MCF 10A (cell line): ENCODE measurements at regions of chr15 and their contacts with region 1.

Region 1: GRCh38 chr15:81400640-81401236 is 26.7 kb upstream of the TMC3 start:
- DNase-seq: peak; percentile 63
- H3K4me3 Mint-ChIP-seq: no peak overlapping the region
- H3K27ac Mint-ChIP-seq: no peak overlapping the region
- H3K4me1 Mint-ChIP-seq: peaks cover 9% of the 10 kb centered on the region
- H3K27me3 Mint-ChIP-seq: no peaks in the 10 kb centered on the region
- CTCF ChIP-seq: peak; percentile 77

Region 2: DNA sequence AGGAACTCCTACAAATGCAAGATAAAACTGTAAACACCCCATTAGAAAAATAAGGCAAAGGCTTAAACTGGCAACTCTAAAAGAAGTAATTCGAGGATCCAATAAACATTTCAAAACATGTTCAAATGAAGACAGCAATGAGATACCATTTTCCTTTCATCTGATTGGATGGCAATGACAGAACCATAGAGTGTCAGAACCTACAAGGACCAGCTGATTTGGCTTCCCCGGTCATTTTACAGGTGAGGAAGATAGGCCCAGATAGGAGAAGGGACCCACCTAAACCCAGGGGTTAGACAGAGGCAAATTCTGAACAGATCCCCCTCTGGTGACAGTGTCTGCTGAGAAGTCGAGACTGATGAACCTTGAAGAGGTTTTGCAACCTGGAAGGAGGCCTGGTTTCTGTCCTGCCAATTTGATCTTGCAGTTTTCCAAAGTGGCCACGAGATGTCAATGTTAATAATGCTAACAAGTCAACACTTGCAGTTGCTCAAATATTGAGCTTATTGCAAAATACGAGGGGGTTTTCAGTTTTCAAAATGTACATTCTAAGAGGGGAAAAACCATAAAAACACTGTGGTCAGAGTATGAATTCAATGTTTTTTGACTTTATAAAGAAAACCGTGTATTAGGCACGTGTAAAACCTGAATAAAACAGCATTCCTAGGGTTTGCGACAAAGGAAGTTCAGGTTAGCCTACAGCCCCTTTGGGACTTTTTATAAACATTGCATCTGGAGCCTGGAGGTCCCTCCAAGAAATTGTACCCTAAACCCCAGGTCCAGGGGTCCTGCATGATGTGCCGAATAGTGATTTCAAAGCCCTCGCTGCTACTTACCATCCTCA is 245.1 kb before region 1 on chr15:
- CTCF ChIA-PET with region 1: interaction called, 3 read pairs
- POLR2A ChIA-PET with region 1: no interaction called
- intact Hi-C with region 1: loop called (anchors 5 kb)
- DNase-seq: peak; percentile 76
- H3K4me3 Mint-ChIP-seq: no peak overlapping the region
- H3K27ac Mint-ChIP-seq: no peak overlapping the region
- H3K4me1 Mint-ChIP-seq: peaks cover 32% of the 10 kb centered on the region
- H3K27me3 Mint-ChIP-seq: no peaks in the 10 kb centered on the region
- CTCF ChIP-seq: peak; percentile 70

Region 3: DNA sequence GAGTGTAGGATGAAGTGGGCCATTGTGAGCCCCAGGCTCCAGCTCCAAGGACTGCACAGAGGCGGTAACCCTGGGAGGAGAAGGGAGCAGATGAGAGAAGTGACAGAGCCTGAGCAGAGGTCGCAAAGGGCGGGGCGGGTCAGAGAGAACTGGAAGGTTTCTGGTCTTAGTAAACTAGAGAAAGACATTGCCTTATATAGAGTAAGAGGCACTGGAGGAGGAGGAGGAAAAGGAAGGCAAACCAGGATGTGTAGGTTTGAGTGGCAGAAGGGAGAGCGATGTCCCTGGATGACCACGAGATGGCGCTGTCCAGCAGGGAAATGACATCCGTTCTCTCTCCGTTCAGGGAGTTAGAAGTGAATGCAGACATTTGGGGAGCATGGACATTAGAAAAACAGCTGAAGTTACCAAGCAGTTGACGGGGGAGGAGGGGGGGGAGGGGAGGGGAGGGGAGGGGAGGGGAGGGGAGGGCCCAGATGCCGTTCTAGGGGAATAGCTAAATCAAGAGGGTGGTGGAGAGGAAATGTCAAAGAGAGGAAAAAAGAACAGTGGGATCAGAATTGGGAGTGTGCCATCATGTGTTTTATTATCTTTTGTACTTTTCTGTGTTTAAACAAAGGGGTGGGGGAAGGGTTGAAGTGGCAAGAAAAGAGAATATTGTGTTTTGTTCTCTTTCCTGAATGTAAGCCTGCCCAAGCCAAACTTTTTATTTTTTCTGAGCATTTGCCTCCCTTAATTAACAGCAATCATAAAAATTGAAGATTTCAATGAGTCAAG is 125.6 kb before region 1 on chr15:
- CTCF ChIA-PET with region 1: interaction called, 318 read pairs
- POLR2A ChIA-PET with region 1: interaction called, 15 read pairs
- intact Hi-C with region 1: loop called (anchors 1 kb)
- DNase-seq: peak; percentile 87
- H3K4me3 Mint-ChIP-seq: no peak overlapping the region
- H3K27ac Mint-ChIP-seq: no peak overlapping the region
- H3K4me1 Mint-ChIP-seq: peaks cover 15% of the 10 kb centered on the region
- H3K27me3 Mint-ChIP-seq: no peaks in the 10 kb centered on the region
- CTCF ChIP-seq: peak; percentile 83

Region 4: GRCh38 chr15:81336568-81336967 is 64.2 kb before region 1 on chr15:
- CTCF ChIA-PET with region 1: interaction called, 5 read pairs
- POLR2A ChIA-PET with region 1: no interaction called
- intact Hi-C with region 1: loop called (anchors 2 kb)
- DNase-seq: peak; percentile 57
- H3K4me3 Mint-ChIP-seq: no peak overlapping the region
- H3K27ac Mint-ChIP-seq: no peak overlapping the region
- H3K4me1 Mint-ChIP-seq: peaks cover 24% of the 10 kb centered on the region
- H3K27me3 Mint-ChIP-seq: no peaks in the 10 kb centered on the region
- CTCF ChIP-seq: peak; percentile 14

Region 5: GRCh38 chr15:81388436-81388770 is 12.3 kb before region 1 on chr15:
- CTCF ChIA-PET with region 1: interaction called, 11 read pairs
- POLR2A ChIA-PET with region 1: no interaction called
- intact Hi-C with region 1: no loop called
- DNase-seq: no peak
- H3K4me3 Mint-ChIP-seq: no peak overlapping the region
- H3K27ac Mint-ChIP-seq: no peak overlapping the region
- H3K4me1 Mint-ChIP-seq: no peaks in the 10 kb centered on the region
- H3K27me3 Mint-ChIP-seq: no peaks in the 10 kb centered on the region
- CTCF ChIP-seq: no peak